Left cardiac atrium (tissue), 4 donors: ENCODE measurements at regions of chr2 and their contacts with region 1.

Region 1: DNA sequence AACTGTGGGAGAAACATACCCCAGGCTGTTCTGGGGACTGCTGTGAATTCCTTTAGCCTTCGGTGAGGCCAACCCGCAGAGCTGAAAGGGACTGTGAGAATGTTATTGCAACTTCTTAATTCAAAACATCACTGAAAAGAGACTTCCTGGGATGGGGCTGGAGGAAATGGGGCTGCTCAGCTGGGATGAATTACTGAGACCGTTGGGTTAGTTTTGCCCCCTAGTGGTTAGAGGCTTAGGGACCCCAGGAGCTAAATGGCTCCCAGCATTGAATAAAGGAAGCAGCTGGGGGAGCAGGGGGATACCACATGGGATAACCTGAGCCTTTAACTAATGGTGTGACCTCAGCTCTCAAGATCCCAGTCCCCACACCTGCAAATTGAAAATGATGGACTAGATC is 941.1 kb upstream of the FANCL start:
- DNase-seq: no peak
- ATAC-seq: no peak

Region 2: DNA sequence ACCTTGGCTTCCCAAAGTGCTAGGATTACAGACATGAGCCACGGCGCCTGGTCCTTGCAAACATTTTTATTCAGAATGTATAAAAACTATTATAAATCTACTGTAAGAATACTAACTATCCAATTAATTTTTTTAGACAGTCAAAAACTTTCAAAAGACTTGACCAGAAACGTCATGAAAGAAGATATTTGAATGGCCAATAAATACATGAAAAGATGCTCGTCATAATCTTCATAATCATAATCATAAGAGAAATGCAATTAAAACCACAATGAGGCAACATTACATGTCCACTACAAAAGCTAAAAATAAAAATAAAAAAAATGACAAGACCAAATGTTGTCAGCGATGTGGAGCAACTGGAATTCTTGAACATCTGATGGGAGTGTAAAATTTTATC is 50.8 kb before region 1 on chr2:
- intact Hi-C with region 1: loop called in 1 of 2 experiments (anchors 5 kb)
- DNase-seq: no peak
- ATAC-seq: no peak